ENCODE measurements at regions of chr15 and their contacts with region 1.

Region 1: DNA sequence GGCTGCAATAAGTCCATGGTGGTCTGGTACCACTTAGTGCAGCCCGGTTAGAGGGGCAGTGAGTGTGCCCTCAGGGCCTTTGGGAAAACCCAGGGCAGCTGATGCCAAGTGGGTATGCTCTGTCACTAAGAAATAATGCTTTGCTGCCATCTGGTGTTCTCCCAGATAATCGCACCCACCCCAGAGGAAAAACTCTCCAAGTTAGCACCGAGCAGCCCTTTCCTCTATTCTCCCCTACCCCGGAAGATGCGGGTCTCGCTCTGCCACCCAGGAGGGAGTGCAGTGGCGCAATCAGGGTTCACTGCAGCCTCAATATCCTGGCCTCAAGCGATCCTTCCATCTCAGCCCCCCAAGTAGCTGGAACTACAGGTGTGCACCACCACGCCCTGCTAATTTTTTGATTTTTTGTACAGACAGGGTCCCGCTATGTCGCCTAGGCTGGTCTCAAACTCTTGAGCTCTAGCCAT is 21.3 kb upstream of the DAPK2 start:
- DNase-seq: peak; percentile 75 to 84 (median 79)
- ATAC-seq: peak; percentile 68
- H3K4me3 ChIP-seq: no peak overlapping the region
- H3K27ac ChIP-seq: no peak overlapping the region
- H3K4me1 ChIP-seq: peaks cover 40% of the 10 kb centered on the region
- H3K27me3 ChIP-seq: no peaks in the 10 kb centered on the region
- CTCF ChIP-seq: peak; percentile 57 to 90 (median 83)
- POLR2A ChIP-seq: no peak

Region 2: DNA sequence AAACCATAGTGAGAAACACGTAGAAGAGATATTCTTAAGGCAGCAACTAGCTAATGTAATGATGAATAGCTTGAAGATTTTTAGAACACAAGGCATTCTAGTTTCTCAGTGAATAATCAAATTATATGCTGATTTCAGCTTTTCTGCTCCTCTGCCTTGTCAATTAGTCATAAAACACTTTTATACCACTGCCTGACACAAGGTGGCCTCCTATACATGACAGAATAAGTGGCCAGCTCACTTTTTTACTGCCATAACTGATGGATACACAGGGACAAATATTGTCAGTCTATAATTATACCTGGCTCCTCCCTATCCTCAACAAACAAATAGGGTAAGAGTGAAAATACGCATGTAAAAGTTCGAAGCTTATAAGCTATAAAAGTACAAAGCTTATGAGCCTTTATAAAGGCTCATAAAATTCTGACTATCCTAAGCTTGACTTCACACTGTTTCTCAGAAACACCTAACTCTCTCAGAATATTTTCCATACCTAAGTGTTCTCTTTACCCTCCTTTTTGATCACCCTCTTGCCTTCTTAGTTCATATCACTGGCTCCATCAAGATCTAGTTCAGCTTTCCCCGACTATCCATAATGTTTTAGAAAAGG is 315.4 kb before region 1 on chr15:
- intact Hi-C with region 1: loop called (anchors 10 kb)
- DNase-seq: peak; percentile 28 to 76 (median 39)
- ATAC-seq: peak; percentile 67
- H3K4me3 ChIP-seq: no peak overlapping the region
- H3K27ac ChIP-seq: no peak overlapping the region
- H3K4me1 ChIP-seq: no peaks in the 10 kb centered on the region
- H3K27me3 ChIP-seq: no peaks in the 10 kb centered on the region
- CTCF ChIP-seq: peak; percentile 37 to 82 (median 75)
- POLR2A ChIP-seq: no peak

Region 3: GRCh38 chr15:64010719-64011118 is 56.9 kb before region 1 on chr15:
- intact Hi-C with region 1: no loop called
- DNase-seq: peak; percentile 77 to 87 (median 81)
- ATAC-seq: peak; percentile 84
- H3K4me3 ChIP-seq: no peak overlapping the region
- H3K27ac ChIP-seq: peak overlapping the region in 1 of 4 donors; percentile 22
- H3K4me1 ChIP-seq: peaks cover 42% of the 10 kb centered on the region
- H3K27me3 ChIP-seq: no peaks in the 10 kb centered on the region
- CTCF ChIP-seq: no peak
- POLR2A ChIP-seq: no peak

Measured in body of pancreas (tissue), 4 donors.